ENCODE measurements at regions of chr12 and their contacts with region 1.

Region 1: GRCh38 chr12:27193854-27194544 is 50.1 kb upstream of the STK38L start:
- DNase-seq: peak; percentile 94
- H3K4me3 ChIP-seq: no peak overlapping the region
- H3K27ac ChIP-seq: peak overlapping the region; percentile 81 to 89 (median 85)
- H3K4me1 ChIP-seq: peaks cover 0 to 78% (median 66%) of the 10 kb centered on the region in 4 donors
- H3K27me3 ChIP-seq: no peaks in the 10 kb centered on the region
- CTCF ChIP-seq: peak in 2 of 4 experiments; percentile 15 to 25
- EP300 ChIP-seq: peak; percentile 67 to 89 (median 83)
- POLR2A ChIP-seq: peak in 1 of 2 donors; percentile 15

Region 2: GRCh38 chr12:26748741-26749431 is 445.1 kb before region 1 on chr12:
- intact Hi-C with region 1: loop called (anchors 10 kb)
- DNase-seq: no peak
- H3K4me3 ChIP-seq: no peak overlapping the region
- H3K27ac ChIP-seq: peak overlapping the region in 1 of 4 donors; percentile 3
- H3K4me1 ChIP-seq: peaks cover 0 to 63% (median 49%) of the 10 kb centered on the region in 4 donors
- H3K27me3 ChIP-seq: no peaks in the 10 kb centered on the region
- CTCF ChIP-seq: no peak
- EP300 ChIP-seq: no peak
- POLR2A ChIP-seq: no peak

Region 3: DNA sequence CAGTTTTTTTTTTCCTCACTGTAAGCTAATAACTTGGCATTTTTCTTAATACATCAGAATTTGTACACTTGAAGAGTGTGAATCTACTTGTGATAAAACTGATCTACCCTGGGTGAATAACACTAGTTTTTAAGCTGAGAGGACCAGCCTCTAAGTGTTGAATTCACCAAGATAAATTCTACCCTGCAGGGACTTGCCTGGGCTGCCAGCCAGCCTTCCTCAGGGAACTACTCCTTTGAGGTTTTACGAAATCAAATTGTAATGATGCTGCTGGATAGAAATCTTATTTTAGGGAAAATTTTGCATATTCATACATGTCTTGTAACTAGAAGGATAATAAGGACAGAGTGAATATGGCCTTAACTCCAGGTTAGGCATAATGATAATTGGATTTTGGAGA is 169.7 kb before region 1 on chr12:
- intact Hi-C with region 1: loop called (anchors 5 kb)
- DNase-seq: no peak
- H3K4me3 ChIP-seq: no peak overlapping the region
- H3K27ac ChIP-seq: no peak overlapping the region
- H3K4me1 ChIP-seq: peaks cover 0 to 27% (median 18%) of the 10 kb centered on the region in 4 donors
- H3K27me3 ChIP-seq: no peaks in the 10 kb centered on the region
- CTCF ChIP-seq: no peak
- EP300 ChIP-seq: no peak
- POLR2A ChIP-seq: no peak

Region 4: GRCh38 chr12:27142101-27142721 is 51.8 kb before region 1 on chr12:
- intact Hi-C with region 1: loop called (anchors 5 kb)
- DNase-seq: peak; percentile 79
- H3K4me3 ChIP-seq: no peak overlapping the region
- H3K27ac ChIP-seq: peak overlapping the region in 2 of 4 donors; percentile 37 to 55
- H3K4me1 ChIP-seq: peaks cover 0 to 24% (median 9%) of the 10 kb centered on the region in 4 donors
- H3K27me3 ChIP-seq: no peaks in the 10 kb centered on the region
- CTCF ChIP-seq: peak; percentile 63 to 79 (median 69)
- EP300 ChIP-seq: no peak
- POLR2A ChIP-seq: no peak

Region 5: DNA sequence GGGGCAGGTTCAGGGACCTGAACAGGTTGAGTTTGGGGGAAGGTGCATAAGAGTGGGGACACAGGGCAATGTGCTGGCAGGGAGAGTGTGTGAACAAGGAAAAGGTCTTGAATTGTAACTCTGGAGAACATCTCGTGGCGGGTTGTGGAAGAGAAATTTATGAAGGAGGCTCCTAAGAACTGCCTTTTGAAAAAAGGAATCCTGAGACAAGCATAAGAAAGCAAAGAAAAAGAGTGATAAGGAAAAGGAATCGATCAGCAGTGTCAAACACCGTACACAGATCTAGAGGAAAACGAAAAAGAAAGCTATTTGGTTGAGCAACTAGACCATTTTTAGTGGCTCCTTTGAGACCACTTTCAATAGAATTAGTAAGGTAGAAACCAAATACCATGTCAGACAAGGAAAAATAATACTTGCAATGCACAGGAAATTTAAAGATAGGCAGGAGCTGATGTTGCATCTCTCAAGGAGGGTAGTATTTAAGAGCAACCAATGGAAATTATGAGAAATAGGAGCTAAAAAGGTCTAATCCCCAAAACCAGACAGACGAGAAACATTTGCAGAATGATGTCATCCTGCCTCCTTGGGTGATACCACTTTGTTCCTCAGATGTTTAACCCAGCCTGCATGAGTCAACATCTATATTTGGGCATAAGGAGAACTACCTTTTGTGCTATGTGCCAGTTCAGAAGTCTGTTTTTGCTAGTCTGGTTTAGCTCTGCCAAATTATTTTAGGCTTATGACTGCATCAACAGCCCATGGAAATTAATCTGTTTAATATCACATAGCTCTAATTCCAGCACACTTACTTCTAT is 14.4 kb before region 1 on chr12:
- intact Hi-C with region 1: loop called (anchors 1 kb)
- DNase-seq: no peak
- H3K4me3 ChIP-seq: peak overlapping the region in 1 of 4 donors; percentile 9
- H3K27ac ChIP-seq: peak overlapping the region; percentile 68 to 86 (median 82)
- H3K4me1 ChIP-seq: peaks cover 0 to 59% (median 45%) of the 10 kb centered on the region in 4 donors
- H3K27me3 ChIP-seq: no peaks in the 10 kb centered on the region
- CTCF ChIP-seq: no peak
- EP300 ChIP-seq: peak; percentile 62 to 95 (median 90)
- POLR2A ChIP-seq: no peak

Region 6: DNA sequence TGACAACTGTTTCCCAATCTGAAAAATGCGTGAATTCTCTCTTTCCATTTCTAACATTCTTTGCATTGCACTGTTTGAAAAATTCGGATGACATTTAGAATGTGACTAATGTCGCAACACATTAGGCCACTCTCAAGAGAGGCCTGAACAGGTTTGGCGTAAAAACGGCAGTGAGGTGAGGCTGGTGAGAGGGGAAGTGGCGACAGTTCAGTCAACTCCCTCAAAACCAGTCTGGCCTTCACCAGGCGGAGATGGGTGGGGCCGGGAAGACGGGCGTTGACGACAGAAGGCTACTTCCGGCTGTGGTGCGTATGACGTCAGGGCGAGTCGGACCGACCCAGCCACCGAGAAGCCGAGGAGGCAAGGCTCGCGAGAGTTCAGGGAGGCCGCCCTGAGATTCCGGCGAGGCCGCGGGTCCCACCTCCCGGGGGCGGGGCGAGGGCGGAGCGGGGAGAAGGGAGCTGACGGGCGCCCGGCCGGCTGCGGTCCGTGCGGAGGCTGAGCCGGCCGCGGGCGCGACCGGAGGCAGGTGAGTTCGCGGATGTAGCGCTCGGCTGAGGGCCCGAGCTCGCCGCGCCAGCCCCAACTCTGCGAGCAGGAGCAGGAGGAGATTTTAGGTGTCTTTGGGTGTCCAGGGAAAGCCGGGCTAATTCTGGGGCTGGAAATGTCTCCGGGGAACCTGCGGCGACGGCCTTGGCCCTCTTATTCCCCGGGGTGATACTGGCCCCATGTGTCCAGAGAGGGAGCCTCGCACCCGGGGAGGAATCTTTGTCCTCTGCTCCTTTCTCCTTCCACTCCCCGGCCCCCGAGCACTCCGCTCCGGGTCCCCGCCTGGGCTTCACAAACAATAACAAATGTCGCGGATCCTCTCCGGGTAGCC is 50.0 kb after region 1 on chr12 and contains the start of gene STK38L:
- intact Hi-C with region 1: loop called (anchors 2 kb)
- DNase-seq: peak; percentile 98
- H3K4me3 ChIP-seq: peak within 1 kb of the TSS; percentile 64 to 95 (median 80)
- H3K27ac ChIP-seq: peak within 1 kb of the TSS; percentile 88 to 95 (median 94)
- H3K4me1 ChIP-seq: peaks cover 0 to 33% (median 21%) of the 10 kb centered on the region in 4 donors
- H3K27me3 ChIP-seq: no peaks in the 10 kb centered on the region
- CTCF ChIP-seq: peak in 2 of 4 experiments; percentile 33 to 43
- EP300 ChIP-seq: peak in 1 of 4 donors; percentile 4
- POLR2A ChIP-seq: peak; percentile 80 to 85
- total RNA-seq, gene STK38L: 67.3 to 86.2 (median 78.3) TPM

Region 7: DNA sequence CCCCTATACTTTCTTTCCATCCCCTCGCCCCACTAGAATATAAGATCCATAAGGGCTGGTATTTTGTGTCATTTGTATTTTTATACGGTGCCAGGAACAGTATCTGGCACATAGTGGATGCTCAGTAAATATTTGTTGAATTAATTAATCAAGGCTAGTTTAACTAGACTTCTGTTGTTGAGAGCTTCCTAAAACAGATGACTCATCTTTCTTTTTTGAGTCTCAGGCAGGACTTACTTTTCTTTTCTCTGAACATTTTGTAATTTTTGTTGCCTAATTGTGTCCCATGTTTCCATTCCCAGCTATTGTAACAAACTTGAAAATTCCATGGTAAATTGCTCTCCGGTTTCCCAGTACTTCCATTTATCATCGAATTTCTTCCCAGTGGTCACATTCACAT is 66.7 kb after region 1 on chr12:
- intact Hi-C with region 1: no loop called
- DNase-seq: no peak
- H3K4me3 ChIP-seq: no peak overlapping the region
- H3K27ac ChIP-seq: peak overlapping the region; percentile 68 to 95 (median 88)
- H3K4me1 ChIP-seq: peaks cover 0 to 75% (median 57%) of the 10 kb centered on the region in 4 donors
- H3K27me3 ChIP-seq: peaks cover 0 to 4% (median 0%) of the 10 kb centered on the region in 3 donors
- CTCF ChIP-seq: no peak
- EP300 ChIP-seq: no peak
- POLR2A ChIP-seq: no peak

Region 8: DNA sequence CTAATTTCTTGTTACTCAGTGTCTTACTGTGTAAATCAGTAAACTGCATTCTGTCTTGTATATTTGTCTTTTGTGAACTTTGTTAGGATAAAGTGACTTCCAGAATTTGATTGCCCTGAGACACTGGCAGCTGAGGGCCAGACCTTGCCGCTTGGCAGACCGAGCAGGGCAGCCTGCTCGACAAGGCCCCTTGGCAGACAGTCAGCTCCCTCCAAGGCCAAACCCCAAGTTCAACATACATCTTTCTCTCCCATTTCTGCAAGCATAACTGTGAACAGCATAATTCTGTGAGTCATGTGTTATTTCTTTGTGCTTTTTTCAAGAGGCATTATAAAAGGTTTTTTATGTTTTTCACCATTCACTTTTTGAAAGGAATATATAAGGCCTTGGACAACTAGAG is 99.5 kb after region 1 on chr12:
- intact Hi-C with region 1: loop called (anchors 5 kb)
- DNase-seq: no peak
- H3K4me3 ChIP-seq: no peak overlapping the region
- H3K27ac ChIP-seq: peak overlapping the region; percentile 17 to 65 (median 56)
- H3K4me1 ChIP-seq: peaks cover 0 to 96% (median 81%) of the 10 kb centered on the region in 4 donors
- H3K27me3 ChIP-seq: no peaks in the 10 kb centered on the region
- CTCF ChIP-seq: no peak
- EP300 ChIP-seq: no peak
- POLR2A ChIP-seq: no peak

Measured in sigmoid colon (tissue), 7 donors.